ENCODE measurements at regions of chr20 and their contacts with region 1.

Region 1: GRCh38 chr20:38321959-38322598 is 18.1 kb downstream of the BPI start:
- DNase-seq: no peak
- ATAC-seq: no peak
- H3K4me3 ChIP-seq: no peak overlapping the region
- H3K27ac ChIP-seq: no peak overlapping the region
- H3K4me1 ChIP-seq: no peaks in the 10 kb centered on the region
- H3K27me3 ChIP-seq: no peaks in the 10 kb centered on the region

Region 2: GRCh38 chr20:37564388-37565133 is 757.5 kb before region 1 on chr20:
- intact Hi-C with region 1: loop called in 1 of 2 experiments (anchors 10 kb)
- DNase-seq: peak in 1 of 2 donors; percentile 88
- ATAC-seq: peak; percentile 71
- H3K4me3 ChIP-seq: no peak overlapping the region
- H3K27ac ChIP-seq: no peak overlapping the region
- H3K4me1 ChIP-seq: no peaks in the 10 kb centered on the region
- H3K27me3 ChIP-seq: no peaks in the 10 kb centered on the region

Region 3: GRCh38 chr20:38057351-38057972 is 264.6 kb before region 1 on chr20:
- intact Hi-C with region 1: loop called in 1 of 2 experiments (anchors 10 kb)
- DNase-seq: peak; percentile 88 to 95
- ATAC-seq: peak; percentile 85
- H3K4me3 ChIP-seq: no peak overlapping the region
- H3K27ac ChIP-seq: no peak overlapping the region
- H3K4me1 ChIP-seq: no peaks in the 10 kb centered on the region
- H3K27me3 ChIP-seq: no peaks in the 10 kb centered on the region

Region 4: GRCh38 chr20:38229376-38230252 is 92.5 kb before region 1 on chr20:
- intact Hi-C with region 1: loop called (anchors 2 kb)
- DNase-seq: peak in 1 of 2 donors; percentile 47
- ATAC-seq: no peak
- H3K4me3 ChIP-seq: no peak overlapping the region
- H3K27ac ChIP-seq: no peak overlapping the region
- H3K4me1 ChIP-seq: no peaks in the 10 kb centered on the region
- H3K27me3 ChIP-seq: no peaks in the 10 kb centered on the region